Activated CD4-positive, alpha-beta memory T cell treated with anti-CD3 and anti-CD28 coated beads, Interleukin-2, amount 10 ng/mL, durations not matched to agents 7 days and 5 days (primary cell): ENCODE measurements at regions of chr3 and their contacts with region 1.

Region 1: GRCh38 chr3:56758539-56758981 is 43.2 kb downstream of the ARHGEF3 start:
- DNase-seq: peak; percentile 45
- H3K4me3 Mint-ChIP-seq: peak overlapping the region; percentile 13
- H3K27ac Mint-ChIP-seq: peak overlapping the region; percentile 65
- H3K4me1 Mint-ChIP-seq: peaks cover 65% of the 10 kb centered on the region
- H3K27me3 Mint-ChIP-seq: peaks cover 2% of the 10 kb centered on the region

Region 2: DNA sequence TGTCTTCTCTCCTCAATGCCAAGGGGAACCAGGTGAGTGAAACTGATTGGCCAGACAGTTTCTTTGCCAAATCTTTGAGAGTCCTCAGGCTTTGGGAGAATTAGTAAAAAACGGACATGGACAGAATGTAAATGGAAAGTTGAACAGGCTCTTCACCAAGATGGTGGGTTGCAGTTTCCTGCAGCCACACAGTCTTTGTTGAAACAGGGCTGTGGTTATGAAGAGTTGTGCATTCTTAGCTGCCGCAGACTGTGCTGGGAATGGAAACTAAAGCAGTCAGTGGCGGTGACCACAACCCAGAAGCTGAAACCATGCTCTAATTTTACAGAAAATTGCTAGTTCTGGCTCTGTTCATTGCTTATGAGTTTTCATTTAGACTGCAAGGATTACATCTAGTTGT is 33.4 kb before region 1 on chr3:
- CTCF ChIA-PET with region 1: interaction called, 6 read pairs
- POLR2A ChIA-PET with region 1: interaction called, 31 read pairs
- DNase-seq: peak; percentile 82
- H3K4me3 Mint-ChIP-seq: peak overlapping the region; percentile 49
- H3K27ac Mint-ChIP-seq: peak overlapping the region; percentile 83
- H3K4me1 Mint-ChIP-seq: peaks cover 34% of the 10 kb centered on the region
- H3K27me3 Mint-ChIP-seq: no peaks in the 10 kb centered on the region

Region 3: GRCh38 chr3:56783644-56784447 is 25.3 kb after region 1 on chr3:
- CTCF ChIA-PET with region 1: interaction called, 14 read pairs
- POLR2A ChIA-PET with region 1: interaction called, 63 read pairs
- DNase-seq: peak; percentile 81
- H3K4me3 Mint-ChIP-seq: peak overlapping the region; percentile 57
- H3K27ac Mint-ChIP-seq: peak overlapping the region; percentile 96
- H3K4me1 Mint-ChIP-seq: peaks cover 89% of the 10 kb centered on the region
- H3K27me3 Mint-ChIP-seq: no peaks in the 10 kb centered on the region

Region 4: DNA sequence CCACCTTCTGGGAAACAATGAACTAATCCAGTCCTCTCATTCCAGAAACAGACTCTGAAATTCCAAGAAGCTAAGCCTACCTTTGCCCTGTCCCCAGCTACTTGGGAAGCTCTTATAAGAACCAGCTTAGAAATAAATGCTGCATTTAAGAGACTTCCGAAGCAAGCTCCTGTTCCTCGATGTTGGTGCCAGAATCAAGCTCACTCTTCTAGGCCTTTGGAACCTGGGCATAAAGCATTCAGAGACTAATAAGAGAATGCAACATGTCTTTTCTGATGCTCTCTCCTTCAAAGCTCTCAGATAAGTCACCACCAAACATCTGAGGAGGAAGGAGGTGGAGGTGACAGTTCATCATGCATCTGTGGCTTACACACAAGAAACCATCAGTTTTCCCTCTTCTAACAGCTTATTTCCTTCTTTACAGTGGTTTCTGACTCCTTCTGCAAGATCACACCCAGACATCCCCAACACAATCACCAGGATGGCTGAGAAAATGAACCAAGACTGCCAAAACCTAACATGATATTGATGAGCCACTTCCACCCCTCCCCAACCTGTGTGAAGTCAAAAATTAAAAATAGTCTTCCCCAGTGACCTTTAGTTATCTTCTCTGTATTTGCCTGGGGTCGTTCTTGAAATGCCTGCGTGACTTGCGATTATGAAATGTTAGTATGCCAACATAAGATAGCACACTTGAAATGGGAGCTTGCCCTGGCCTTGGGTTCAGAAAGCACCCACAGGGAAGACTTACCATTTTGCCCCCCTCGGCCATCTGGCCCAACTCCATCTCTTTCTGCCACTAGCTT is 31.7 kb after region 1 on chr3:
- CTCF ChIA-PET with region 1: interaction called, 14 read pairs
- POLR2A ChIA-PET with region 1: interaction called, 63 read pairs
- DNase-seq: peak; percentile 24
- H3K4me3 Mint-ChIP-seq: peak overlapping the region; percentile 51
- H3K27ac Mint-ChIP-seq: peak overlapping the region; percentile 93
- H3K4me1 Mint-ChIP-seq: peaks cover 81% of the 10 kb centered on the region
- H3K27me3 Mint-ChIP-seq: no peaks in the 10 kb centered on the region